ENCODE measurements at regions of chr1 and their contacts with region 1.

Region 1: GRCh38 chr1:83905315-83905907 is 93.5 kb downstream of the TTLL7 start:
- DNase-seq: peak; percentile 26 to 43 (median 30)
- ATAC-seq: peak; percentile 56; the same call in 2 of the 3 replicates
- H3K4me3 ChIP-seq: no peak overlapping the region
- H3K27ac ChIP-seq: no peak overlapping the region
- H3K4me1 ChIP-seq: peaks cover 0 to 5% of the 10 kb centered on the region in 2 experiments; a peak in 3 of 5 replicates
- H3K27me3 ChIP-seq: no peaks in the 10 kb centered on the region
- CTCF ChIP-seq: peak in 2 of 3 experiments; percentile 31 to 69; a peak in 3 of 6 replicates
- EP300 ChIP-seq: no peak
- POLR2A ChIP-seq: no peak
- RAD21 ChIP-seq: peak; percentile 20 to 62; a peak in 3 of 4 replicates

Region 2: GRCh38 chr1:82947278-82947677 is 958.1 kb before region 1 on chr1:
- CTCF ChIA-PET with region 1: no interaction called
- POLR2A ChIA-PET with region 1: no interaction called
- in situ Hi-C with region 1: no loop called
- intact Hi-C with region 1: no loop called
- DNase-seq: no peak
- ATAC-seq: no peak
- H3K4me3 ChIP-seq: no peak overlapping the region
- H3K27ac ChIP-seq: no peak overlapping the region
- H3K4me1 ChIP-seq: no peaks in the 10 kb centered on the region
- H3K27me3 ChIP-seq: no peaks in the 10 kb centered on the region
- CTCF ChIP-seq: no peak
- EP300 ChIP-seq: no peak
- POLR2A ChIP-seq: no peak
- RAD21 ChIP-seq: no peak

Region 3: DNA sequence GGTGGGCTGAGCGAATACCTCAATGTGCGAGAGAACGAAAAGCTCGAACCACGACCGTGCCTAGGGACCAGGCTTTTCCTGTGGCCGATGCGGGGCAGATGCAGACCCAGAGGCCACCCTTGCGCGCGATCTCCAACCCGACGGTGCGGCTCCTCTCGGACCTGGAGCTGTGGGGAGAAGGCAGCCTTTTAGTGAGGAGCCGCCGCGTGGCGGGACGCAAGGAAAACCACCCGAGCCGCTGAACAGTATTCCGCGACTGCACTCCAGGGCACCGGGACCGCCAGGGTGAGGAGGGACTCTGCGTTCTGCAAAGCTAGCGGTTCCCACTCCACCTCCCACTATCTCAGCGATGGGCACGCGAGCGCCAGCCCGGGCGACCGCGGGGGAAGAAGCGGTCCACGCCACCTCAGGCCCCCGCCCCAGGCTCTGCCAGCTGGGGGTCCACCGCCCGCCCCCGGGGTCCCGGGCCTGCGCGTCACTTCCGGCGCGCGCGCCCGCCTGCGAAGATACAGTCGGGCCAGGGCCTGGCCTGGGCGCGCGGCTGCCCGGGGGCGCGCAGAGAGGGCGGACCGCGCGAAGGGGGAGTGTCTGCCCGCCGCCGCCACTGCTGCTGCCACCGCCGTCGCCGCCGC is 172.2 kb after region 1 on chr1:
- CTCF ChIA-PET with region 1: no interaction called
- POLR2A ChIA-PET with region 1: no interaction called
- in situ Hi-C with region 1: no loop called
- intact Hi-C with region 1: loop called (anchors 5 kb)
- DNase-seq: peak; percentile 83 to 92 (median 88)
- ATAC-seq: peak; percentile 92
- H3K4me3 ChIP-seq: peak overlapping the region; percentile 83
- H3K27ac ChIP-seq: peak overlapping the region; percentile 86
- H3K4me1 ChIP-seq: peaks cover 0 to 10% of the 10 kb centered on the region in 2 experiments; a peak in 2 of 5 replicates
- H3K27me3 ChIP-seq: no peaks in the 10 kb centered on the region
- CTCF ChIP-seq: no peak
- EP300 ChIP-seq: no peak
- POLR2A ChIP-seq: peak; percentile 85
- RAD21 ChIP-seq: peak in 1 of 2 experiments; percentile 21; a peak in 1 of 4 replicates

Region 4: GRCh38 chr1:84433258-84434080 is 528.1 kb after region 1 on chr1:
- CTCF ChIA-PET with region 1: interaction called, 3 read pairs
- POLR2A ChIA-PET with region 1: no interaction called
- in situ Hi-C with region 1: no loop called
- intact Hi-C with region 1: loop called (anchors 2 kb)
- DNase-seq: peak; percentile 40 to 72 (median 48)
- ATAC-seq: peak; percentile 74; the same call in 2 of the 3 replicates
- H3K4me3 ChIP-seq: no peak overlapping the region
- H3K27ac ChIP-seq: no peak overlapping the region
- H3K4me1 ChIP-seq: no peaks in the 10 kb centered on the region
- H3K27me3 ChIP-seq: no peaks in the 10 kb centered on the region
- CTCF ChIP-seq: peak; percentile 53 to 78 (median 68); a peak in 5 of 6 replicates
- EP300 ChIP-seq: no peak
- POLR2A ChIP-seq: no peak
- RAD21 ChIP-seq: peak; percentile 90 to 94

Region 5: GRCh38 chr1:84620720-84621313 is 715.4 kb after region 1 on chr1:
- CTCF ChIA-PET with region 1: no interaction called
- POLR2A ChIA-PET with region 1: no interaction called
- in situ Hi-C with region 1: loop called (anchors 25 kb)
- intact Hi-C with region 1: no loop called
- DNase-seq: peak; percentile 88 to 93 (median 92)
- ATAC-seq: peak; percentile 97
- H3K4me3 ChIP-seq: peak overlapping the region; percentile 71
- H3K27ac ChIP-seq: peak overlapping the region; percentile 77
- H3K4me1 ChIP-seq: peaks cover 9 to 10% of the 10 kb centered on the region in 2 experiments
- H3K27me3 ChIP-seq: 0 out of 5 replicates have a peak, but pooled peaks cover 0 to 3% of the 10 kb centered on the region in 2 experiments
- CTCF ChIP-seq: peak; percentile 72 to 93 (median 89)
- EP300 ChIP-seq: no peak
- POLR2A ChIP-seq: peak; percentile 68
- RAD21 ChIP-seq: peak; percentile 84 to 85

Region 6: GRCh38 chr1:84936116-84936810 is 1030.9 kb after region 1 on chr1:
- CTCF ChIA-PET with region 1: no interaction called
- POLR2A ChIA-PET with region 1: no interaction called
- in situ Hi-C with region 1: loop called (anchors 25 kb)
- intact Hi-C with region 1: loop called (anchors 10 kb)
- DNase-seq: peak; percentile 60 to 71 (median 63)
- ATAC-seq: peak; percentile 88
- H3K4me3 ChIP-seq: no peak overlapping the region
- H3K27ac ChIP-seq: no peak overlapping the region
- H3K4me1 ChIP-seq: no peaks in the 10 kb centered on the region
- H3K27me3 ChIP-seq: peaks cover 13 to 18% of the 10 kb centered on the region in 2 experiments; a peak in 4 of 5 replicates
- CTCF ChIP-seq: peak; percentile 67 to 90 (median 87)
- EP300 ChIP-seq: no peak
- POLR2A ChIP-seq: no peak
- RAD21 ChIP-seq: peak; percentile 83 to 85